Activated CD4-positive, alpha-beta memory T cell treated with anti-CD3 and anti-CD28 coated beads for 36 hours (primary cell): ENCODE measurements at regions of chr18 and their contacts with region 1.

Region 1: DNA sequence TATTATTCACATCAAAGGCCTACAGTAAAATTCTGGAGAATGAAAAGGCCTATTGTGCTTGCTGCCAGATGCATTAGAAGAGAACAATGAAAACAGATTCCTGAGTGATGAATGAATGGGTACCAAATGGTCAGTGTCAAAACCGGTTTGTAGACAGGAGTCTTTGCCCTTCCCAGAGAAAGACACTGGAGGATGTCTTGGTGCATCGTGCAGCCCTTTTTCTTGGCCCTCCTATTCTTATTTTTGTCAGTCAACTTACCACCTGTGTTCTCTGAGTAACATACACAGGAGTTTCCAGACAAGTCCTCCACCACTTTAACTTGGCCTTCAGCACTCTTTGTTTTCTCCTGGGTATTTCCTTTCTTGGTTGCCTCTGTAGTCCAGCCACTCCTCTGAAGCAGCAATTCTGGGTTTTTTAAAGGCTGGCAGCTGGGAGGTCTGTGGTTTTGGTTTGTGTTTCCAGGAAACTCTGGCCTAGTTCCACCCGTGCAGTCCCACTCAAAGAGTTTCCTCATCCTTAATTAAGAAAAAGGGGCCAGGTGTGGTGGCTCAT is 29.4 kb downstream of the PSTPIP2 start:
- DNase-seq: peak; percentile 56
- H3K4me3 Mint-ChIP-seq: no peak overlapping the region
- H3K27ac Mint-ChIP-seq: peak overlapping the region; percentile 52
- H3K4me1 Mint-ChIP-seq: peaks cover 43% of the 10 kb centered on the region
- H3K27me3 Mint-ChIP-seq: no peaks in the 10 kb centered on the region

Region 2: GRCh38 chr18:45738658-45739057 is 304.0 kb before region 1 on chr18:
- CTCF ChIA-PET with region 1: no interaction called
- POLR2A ChIA-PET with region 1: no interaction called
- intact Hi-C with region 1: no loop called
- DNase-seq: no peak
- H3K4me3 Mint-ChIP-seq: no peak overlapping the region
- H3K27ac Mint-ChIP-seq: no peak overlapping the region
- H3K4me1 Mint-ChIP-seq: no peaks in the 10 kb centered on the region
- H3K27me3 Mint-ChIP-seq: no peaks in the 10 kb centered on the region

Region 3: GRCh38 chr18:45900623-45901022 is 142.0 kb before region 1 on chr18:
- CTCF ChIA-PET with region 1: no interaction called
- POLR2A ChIA-PET with region 1: no interaction called
- intact Hi-C with region 1: no loop called
- DNase-seq: no peak
- H3K4me3 Mint-ChIP-seq: no peak overlapping the region
- H3K27ac Mint-ChIP-seq: no peak overlapping the region
- H3K4me1 Mint-ChIP-seq: no peaks in the 10 kb centered on the region
- H3K27me3 Mint-ChIP-seq: no peaks in the 10 kb centered on the region

Region 4: DNA sequence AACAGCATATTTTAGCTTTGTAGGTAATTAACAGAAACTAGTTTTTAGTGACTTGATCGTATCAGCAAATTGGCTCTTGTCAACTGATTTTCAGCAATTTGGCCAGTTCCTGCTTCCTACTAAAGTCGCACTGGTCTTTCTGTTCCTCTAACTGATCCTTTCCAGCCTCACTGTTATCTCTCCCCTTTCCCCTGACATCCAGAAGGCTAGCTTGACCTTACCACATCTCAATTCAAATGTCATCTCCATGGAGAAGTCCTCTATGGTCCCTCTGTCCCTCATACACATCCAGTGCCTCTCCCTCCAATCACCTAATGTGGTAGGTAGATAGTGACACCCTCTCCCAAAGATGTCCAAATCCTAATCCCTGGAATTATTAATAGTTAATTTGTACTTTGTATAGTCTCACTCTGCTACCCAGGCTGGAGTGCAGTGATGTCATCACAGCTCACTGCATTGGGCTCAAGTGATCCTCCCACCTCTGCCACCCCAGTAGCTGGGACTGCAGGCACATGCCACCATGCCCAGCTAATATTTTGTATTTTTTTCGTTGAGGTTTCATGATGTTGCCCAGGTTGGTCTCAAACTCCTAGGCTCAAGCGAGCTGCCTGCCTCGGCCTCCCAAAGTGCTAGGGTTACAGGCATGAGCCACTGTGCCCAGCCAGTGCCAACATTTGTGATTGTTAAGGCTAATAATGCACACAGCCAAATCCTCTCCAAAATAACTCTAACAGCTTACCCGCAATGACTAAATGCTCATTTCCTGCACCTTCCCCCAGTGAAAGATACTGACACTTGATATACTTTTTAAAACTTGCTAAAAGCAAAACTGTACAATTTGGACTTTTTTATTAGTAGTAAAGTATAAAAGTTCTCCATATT is 12.6 kb after region 1 on chr18:
- CTCF ChIA-PET with region 1: no interaction called
- POLR2A ChIA-PET with region 1: no interaction called
- intact Hi-C with region 1: loop called (anchors 1 kb)
- DNase-seq: no peak
- H3K4me3 Mint-ChIP-seq: no peak overlapping the region
- H3K27ac Mint-ChIP-seq: peak overlapping the region; percentile 24
- H3K4me1 Mint-ChIP-seq: peaks cover 41% of the 10 kb centered on the region
- H3K27me3 Mint-ChIP-seq: no peaks in the 10 kb centered on the region

Region 5: GRCh38 chr18:46097801-46098615 is 55.4 kb after region 1 on chr18 and contains the start of gene ATP5F1A:
- CTCF ChIA-PET with region 1: no interaction called
- POLR2A ChIA-PET with region 1: no interaction called
- intact Hi-C with region 1: no loop called
- DNase-seq: peak; percentile 94
- H3K4me3 Mint-ChIP-seq: peak within 1 kb of the TSS; percentile 98
- H3K27ac Mint-ChIP-seq: peak within 1 kb of the TSS; percentile 93
- H3K4me1 Mint-ChIP-seq: peaks cover 25% of the 10 kb centered on the region
- H3K27me3 Mint-ChIP-seq: no peaks in the 10 kb centered on the region
- total RNA-seq, gene ATP5F1A: 442 to 447 TPM